ENCODE measurements at regions of chr12 and their contacts with region 1.

Region 1: DNA sequence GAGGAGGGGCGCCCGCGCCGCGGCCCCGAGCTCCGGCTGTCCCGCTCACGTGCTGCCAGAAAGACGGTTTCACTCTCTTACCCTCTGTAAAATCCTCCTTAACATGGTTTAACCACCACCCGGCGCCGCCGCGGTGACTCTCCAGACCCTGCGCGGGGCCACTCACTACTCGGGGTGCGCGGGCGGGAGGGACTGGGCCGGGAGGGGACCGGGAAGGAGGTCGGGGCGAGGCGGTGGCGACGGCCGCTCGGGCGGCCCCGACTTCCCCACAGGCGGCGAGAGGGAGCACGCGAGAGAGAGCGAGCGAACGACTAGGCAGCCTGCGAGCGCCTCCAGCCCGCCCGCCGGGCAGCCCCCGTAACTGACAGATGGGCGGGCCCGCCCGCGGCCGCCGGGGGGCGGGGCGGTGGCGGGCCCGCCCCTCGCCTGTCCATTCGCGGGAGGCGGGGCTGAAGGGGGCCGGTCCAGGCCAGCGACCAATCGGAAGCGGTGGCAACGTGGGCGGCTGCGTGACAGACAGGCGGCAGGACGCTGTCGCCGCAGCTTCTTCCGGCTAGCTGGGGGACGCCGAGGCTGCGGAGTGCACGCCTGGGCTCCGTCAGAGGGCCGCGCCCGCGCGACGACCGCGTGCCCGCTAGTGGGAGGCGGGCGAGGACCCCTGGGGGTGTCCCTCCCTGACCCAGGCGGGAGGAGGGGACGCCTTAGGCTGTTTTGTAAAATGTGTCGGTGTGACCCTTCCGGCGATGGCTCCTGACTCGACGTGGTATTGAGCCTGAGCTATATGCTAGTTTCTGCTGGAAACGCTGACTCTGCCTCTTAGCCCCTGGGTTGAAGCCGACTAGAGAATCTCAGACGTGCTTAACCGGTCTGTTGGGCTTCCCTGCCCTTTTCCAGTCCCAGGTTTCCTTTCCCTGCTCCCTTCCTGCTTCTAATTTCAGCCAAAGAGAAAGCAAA is at the start of gene EEA1:
- DNase-seq: peak; percentile 97
- H3K4me3 ChIP-seq: peak within 1 kb of the TSS; percentile 75
- H3K27ac ChIP-seq: peak within 1 kb of the TSS; percentile 78
- H3K4me1 ChIP-seq: peaks cover 28% of the 10 kb centered on the region
- CTCF ChIP-seq: peak; percentile 40; the same call in 1 of the 2 replicates
- total RNA-seq, gene EEA1: 3.0 and 8.4 TPM in 2 replicates

Region 2: GRCh38 chr12:92784795-92785562 is 144.3 kb before region 1 on chr12:
- CTCF ChIA-PET with region 1: no interaction called
- POLR2A ChIA-PET with region 1: interaction called, 3 read pairs
- intact Hi-C with region 1: loop called (anchors 1 kb)
- DNase-seq: peak; percentile 79
- H3K4me3 ChIP-seq: no peak overlapping the region
- H3K27ac ChIP-seq: no peak overlapping the region
- H3K4me1 ChIP-seq: no peaks in the 10 kb centered on the region
- CTCF ChIP-seq: peak; percentile 84

Region 3: DNA sequence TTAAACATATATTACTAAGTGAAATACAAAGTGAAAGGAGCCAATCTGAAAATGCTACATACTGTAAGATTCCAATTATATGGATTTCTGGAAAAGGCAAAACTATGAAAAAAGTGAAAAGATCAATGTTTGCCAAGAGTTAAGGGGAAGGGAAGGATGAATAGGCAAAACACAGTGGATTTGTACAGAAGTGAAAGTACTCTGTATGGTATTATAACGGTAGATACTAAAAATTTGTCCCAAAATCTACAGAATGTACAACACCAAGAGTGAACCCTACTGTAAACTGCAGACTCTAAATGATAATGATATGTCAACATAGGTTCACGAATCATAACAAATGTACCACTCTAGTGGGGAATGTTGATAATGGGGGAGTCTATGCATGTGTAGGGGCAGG is 17.9 kb before region 1 on chr12:
- CTCF ChIA-PET with region 1: no interaction called
- POLR2A ChIA-PET with region 1: interaction called, 27 read pairs
- intact Hi-C with region 1: no loop called
- DNase-seq: no peak
- H3K4me3 ChIP-seq: no peak overlapping the region
- H3K27ac ChIP-seq: no peak overlapping the region
- H3K4me1 ChIP-seq: no peaks in the 10 kb centered on the region
- CTCF ChIP-seq: no peak

Region 4: GRCh38 chr12:93167841-93168492 is 238.7 kb after region 1 on chr12:
- CTCF ChIA-PET with region 1: no interaction called
- POLR2A ChIA-PET with region 1: no interaction called
- intact Hi-C with region 1: loop called (anchors 5 kb)
- DNase-seq: peak; percentile 58
- H3K4me3 ChIP-seq: peak overlapping the region; percentile 59
- H3K27ac ChIP-seq: peak overlapping the region; percentile 90
- H3K4me1 ChIP-seq: peaks cover 44% of the 10 kb centered on the region
- CTCF ChIP-seq: no peak

Measured in OCI-LY7 (cell line).